ENCODE measurements at regions of chr7 and their contacts with region 1.

Region 1: GRCh38 chr7:50251765-50252164 is 52.8 kb upstream of the IKZF1 start:
- DNase-seq: no peak
- ATAC-seq: peak; percentile 69
- H3K4me3 ChIP-seq: no peak overlapping the region
- H3K27ac ChIP-seq: no peak overlapping the region
- H3K4me1 ChIP-seq: no peaks in the 10 kb centered on the region
- H3K27me3 ChIP-seq: no peaks in the 10 kb centered on the region
- CTCF ChIP-seq: no peak
- EP300 ChIP-seq: no peak
- POLR2A ChIP-seq: no peak
- RAD21 ChIP-seq: no peak

Region 2: GRCh38 chr7:48617993-48618392 is 1633.8 kb before region 1 on chr7:
- CTCF ChIA-PET with region 1: no interaction called
- POLR2A ChIA-PET with region 1: no interaction called
- in situ Hi-C with region 1: loop called (anchors 10 kb)
- intact Hi-C with region 1: no loop called
- DNase-seq: no peak
- ATAC-seq: no peak
- H3K4me3 ChIP-seq: no peak overlapping the region
- H3K27ac ChIP-seq: no peak overlapping the region
- H3K4me1 ChIP-seq: no peaks in the 10 kb centered on the region
- H3K27me3 ChIP-seq: no peaks in the 10 kb centered on the region
- CTCF ChIP-seq: no peak
- EP300 ChIP-seq: no peak
- POLR2A ChIP-seq: no peak
- RAD21 ChIP-seq: peak in 1 of 2 experiments; percentile 34; a peak in 2 of 4 replicates

Region 3: GRCh38 chr7:50335795-50336754 is 84.3 kb after region 1 on chr7:
- CTCF ChIA-PET with region 1: no interaction called
- POLR2A ChIA-PET with region 1: no interaction called
- in situ Hi-C with region 1: no loop called
- intact Hi-C with region 1: no loop called
- DNase-seq: peak; percentile 79 to 89 (median 85)
- ATAC-seq: peak; percentile 50
- H3K4me3 ChIP-seq: no peak overlapping the region
- H3K27ac ChIP-seq: peak overlapping the region; percentile 74
- H3K4me1 ChIP-seq: peaks cover 58 to 97% of the 10 kb centered on the region in 2 experiments
- H3K27me3 ChIP-seq: no peaks in the 10 kb centered on the region; a peak in 1 of 5 replicates
- CTCF ChIP-seq: peak; percentile 15 to 25 (median 19); a peak in 2 of 6 replicates
- EP300 ChIP-seq: no peak
- POLR2A ChIP-seq: no peak
- RAD21 ChIP-seq: no peak